ENCODE measurements at regions of chr3 and their contacts with region 1.

Region 1: DNA sequence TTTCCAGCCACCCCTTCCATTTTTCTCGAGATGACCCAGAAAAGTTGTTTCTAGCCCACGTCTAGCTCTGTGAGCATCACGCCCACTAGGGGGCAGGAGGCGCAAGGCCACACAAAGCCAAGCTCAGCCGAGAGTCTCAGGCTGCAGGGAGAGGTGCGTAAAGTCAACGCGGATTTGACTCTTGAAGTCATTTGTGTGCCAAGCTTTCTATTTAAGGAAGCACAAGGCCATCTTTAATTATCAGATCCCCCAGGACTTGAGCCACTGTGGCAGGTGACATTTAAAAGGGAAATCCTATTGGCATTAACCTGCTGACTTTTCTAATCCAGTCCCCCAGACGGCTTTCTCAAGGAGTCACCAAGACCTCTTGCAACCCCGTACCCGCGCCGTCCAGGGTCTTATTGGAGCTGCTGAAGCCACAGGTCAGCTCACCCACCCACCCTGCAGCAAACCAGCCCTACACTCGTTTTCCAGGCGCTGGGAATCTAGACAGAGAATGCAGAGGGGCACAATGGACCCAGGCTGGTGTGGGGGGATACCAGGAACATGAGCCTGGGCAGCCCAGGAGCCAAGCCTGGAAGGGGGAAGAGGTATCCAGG is 62.1 kb downstream of the CAPN7 start:
- DNase-seq: peak; percentile 82 to 85 (median 83)
- H3K4me3 ChIP-seq: no peak overlapping the region
- H3K4me3 Mint-ChIP-seq: peak overlapping the region in 7 of 8 donors; percentile 24 to 86 (median 60)
- H3K27ac ChIP-seq: peak overlapping the region; percentile 65
- H3K27ac Mint-ChIP-seq: peak overlapping the region; percentile 35 to 96 (median 87)
- H3K4me1 ChIP-seq: peaks cover 88% of the 10 kb centered on the region
- H3K4me1 Mint-ChIP-seq: peaks cover 50 to 93% (median 77%) of the 10 kb centered on the region in 4 donors
- H3K27me3 ChIP-seq: no peaks in the 10 kb centered on the region
- H3K27me3 Mint-ChIP-seq: no peaks in the 10 kb centered on the region

Region 2: DNA sequence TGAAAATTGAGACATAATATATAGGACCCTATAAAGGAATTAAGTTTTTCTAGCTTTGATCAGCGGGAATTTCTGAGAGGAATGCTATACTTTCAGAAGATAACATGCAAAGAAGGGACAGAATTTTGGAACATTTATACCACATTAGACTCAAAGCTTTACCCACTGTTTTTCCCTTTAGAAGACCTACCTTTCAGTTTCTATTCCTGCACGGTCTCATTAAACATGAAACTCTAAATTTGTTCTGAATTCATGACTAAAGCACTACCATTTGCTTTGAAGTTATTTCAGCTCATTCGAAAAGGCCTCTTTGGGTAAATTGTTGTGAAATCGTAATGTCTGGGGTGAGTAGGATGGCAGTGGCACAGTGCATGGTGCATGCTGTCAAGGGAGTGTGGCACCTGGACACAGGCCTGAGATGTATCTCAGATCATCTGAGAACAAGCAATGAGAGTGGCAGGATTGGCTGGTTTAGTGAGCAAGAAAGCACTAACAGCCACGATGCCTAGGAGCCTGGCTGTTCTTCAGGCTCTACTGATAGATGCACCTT is 1185.9 kb before region 1 on chr3:
- CTCF ChIA-PET with region 1: no interaction called
- POLR2A ChIA-PET with region 1: no interaction called
- intact Hi-C with region 1: no loop called
- DNase-seq: no peak
- H3K4me3 ChIP-seq: no peak overlapping the region
- H3K4me3 Mint-ChIP-seq: no peak overlapping the region
- H3K27ac ChIP-seq: no peak overlapping the region
- H3K27ac Mint-ChIP-seq: no peak overlapping the region
- H3K4me1 ChIP-seq: no peaks in the 10 kb centered on the region
- H3K4me1 Mint-ChIP-seq: peaks cover 0 to 4% (median 3%) of the 10 kb centered on the region in 4 donors
- H3K27me3 ChIP-seq: no peaks in the 10 kb centered on the region
- H3K27me3 Mint-ChIP-seq: peaks cover 2 to 7% of the 10 kb centered on the region in 2 donors

Region 3: GRCh38 chr3:15205934-15206661 is 62.0 kb before region 1 on chr3 and contains the start of gene CAPN7:
- CTCF ChIA-PET with region 1: interaction called, 68 read pairs
- POLR2A ChIA-PET with region 1: interaction called, 11 read pairs
- intact Hi-C with region 1: loop called (anchors 1 kb)
- DNase-seq: peak; percentile 92 to 95 (median 94)
- H3K4me3 ChIP-seq: peak within 1 kb of the TSS; percentile 70 to 83
- H3K4me3 Mint-ChIP-seq: peak within 1 kb of the TSS; percentile 91 to 96 (median 92)
- H3K27ac ChIP-seq: peak within 1 kb of the TSS; percentile 88
- H3K27ac Mint-ChIP-seq: peak within 1 kb of the TSS; percentile 77 to 97 (median 95)
- H3K4me1 ChIP-seq: peaks cover 46% of the 10 kb centered on the region
- H3K4me1 Mint-ChIP-seq: peaks cover 18 to 43% (median 29%) of the 10 kb centered on the region in 4 donors
- H3K27me3 ChIP-seq: no peaks in the 10 kb centered on the region
- H3K27me3 Mint-ChIP-seq: no peaks in the 10 kb centered on the region
- total RNA-seq, gene CAPN7: 95.5 to 103 TPM

Region 4: DNA sequence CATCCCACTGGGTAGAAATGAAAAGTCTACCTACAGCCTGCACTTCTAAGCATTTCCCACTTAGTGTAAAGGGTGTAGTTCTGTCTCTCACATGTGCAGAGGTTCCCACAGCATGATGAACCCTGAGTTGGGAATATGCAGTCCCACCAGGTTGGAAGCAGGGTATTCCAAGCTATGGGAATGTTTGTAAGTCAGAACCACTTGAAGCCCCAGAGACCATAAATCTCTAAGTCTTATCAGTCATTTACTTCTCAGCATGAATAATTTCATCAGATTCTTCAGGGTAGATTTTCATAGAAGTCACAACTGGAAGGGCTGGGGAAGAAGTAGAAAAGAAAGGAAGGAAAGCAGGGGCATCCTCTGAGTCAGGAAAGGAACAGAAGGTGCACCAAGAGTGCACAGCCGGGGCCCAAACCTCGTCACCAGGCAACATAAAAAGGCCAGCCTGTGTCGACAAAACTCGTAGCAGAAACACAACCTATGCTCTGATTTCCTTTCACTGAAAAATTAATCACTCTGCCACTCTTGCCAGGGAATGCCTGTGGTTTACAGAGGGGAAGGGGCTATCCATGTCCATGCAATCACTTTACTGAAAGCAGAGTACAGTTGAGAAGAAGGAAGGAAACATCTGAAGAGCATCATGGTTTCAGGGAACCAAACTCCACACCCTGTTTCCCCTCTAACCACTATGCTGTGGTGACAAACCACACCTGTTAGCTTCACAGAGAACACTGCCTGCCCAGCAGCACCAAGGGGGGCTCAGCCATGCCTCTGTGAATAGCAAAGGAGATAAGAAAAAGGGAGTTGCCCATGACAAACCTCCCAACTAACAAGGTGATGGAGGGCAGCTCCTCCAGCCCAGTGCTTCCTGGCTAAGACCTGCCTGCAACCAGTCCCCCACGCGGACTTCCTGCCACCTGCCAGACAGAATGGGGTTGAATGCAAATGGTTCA is 23.7 kb after region 1 on chr3:
- CTCF ChIA-PET with region 1: interaction called, 40 read pairs
- POLR2A ChIA-PET with region 1: interaction called, 32 read pairs
- intact Hi-C with region 1: loop called (anchors 1 kb)
- DNase-seq: peak; percentile 78 to 92 (median 80)
- H3K4me3 ChIP-seq: peak overlapping the region; percentile 21 to 42
- H3K4me3 Mint-ChIP-seq: peak overlapping the region; percentile 76 to 85 (median 80)
- H3K27ac ChIP-seq: peak overlapping the region; percentile 70
- H3K27ac Mint-ChIP-seq: peak overlapping the region; percentile 91 to 97 (median 92)
- H3K4me1 ChIP-seq: peaks cover 93% of the 10 kb centered on the region
- H3K4me1 Mint-ChIP-seq: peaks cover 72 to 98% (median 85%) of the 10 kb centered on the region in 4 donors
- H3K27me3 ChIP-seq: no peaks in the 10 kb centered on the region
- H3K27me3 Mint-ChIP-seq: no peaks in the 10 kb centered on the region

Region 5: GRCh38 chr3:15319575-15319974 is 51.4 kb after region 1 on chr3:
- CTCF ChIA-PET with region 1: interaction called, 38 read pairs
- POLR2A ChIA-PET with region 1: interaction called, 11 read pairs
- intact Hi-C with region 1: no loop called
- DNase-seq: no peak
- H3K4me3 ChIP-seq: no peak overlapping the region
- H3K4me3 Mint-ChIP-seq: peak overlapping the region; percentile 9 to 88 (median 38)
- H3K27ac ChIP-seq: peak overlapping the region; percentile 5
- H3K27ac Mint-ChIP-seq: peak overlapping the region in 4 of 7 donors; percentile 46 to 90 (median 86)
- H3K4me1 ChIP-seq: peaks cover 88% of the 10 kb centered on the region
- H3K4me1 Mint-ChIP-seq: peaks cover 63 to 96% (median 77%) of the 10 kb centered on the region in 4 donors
- H3K27me3 ChIP-seq: no peaks in the 10 kb centered on the region
- H3K27me3 Mint-ChIP-seq: no peaks in the 10 kb centered on the region

Region 6: DNA sequence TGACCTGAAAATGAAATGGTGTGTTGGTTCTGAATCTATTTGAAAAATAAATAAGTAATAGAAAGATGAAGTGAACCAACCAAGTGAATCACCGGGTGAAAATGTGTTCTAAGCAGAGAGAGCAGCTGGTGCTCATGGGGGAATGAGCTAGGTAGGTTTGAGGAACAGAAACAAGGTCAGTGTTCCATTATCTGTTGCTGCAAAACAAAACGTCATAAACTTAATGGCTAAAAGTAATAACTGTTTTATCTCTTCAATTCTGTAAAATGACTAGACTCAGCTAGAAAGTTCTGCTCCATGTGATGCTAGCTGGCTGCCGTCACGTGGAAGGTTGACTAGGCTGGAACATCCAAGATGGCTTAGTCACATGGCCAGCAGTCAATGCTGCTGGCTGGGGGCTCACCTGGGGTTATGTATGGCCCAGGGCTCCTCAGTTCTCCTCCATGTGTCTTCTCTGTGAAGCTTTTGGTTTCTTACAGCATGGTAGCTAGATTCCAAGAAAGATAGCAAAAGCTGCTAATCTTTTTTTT is 77.5 kb after region 1 on chr3:
- CTCF ChIA-PET with region 1: interaction called, 41 read pairs
- POLR2A ChIA-PET with region 1: interaction called, 47 read pairs
- intact Hi-C with region 1: no loop called
- DNase-seq: peak in 2 of 5 donors; percentile 21 to 31
- H3K4me3 ChIP-seq: no peak overlapping the region
- H3K4me3 Mint-ChIP-seq: peak overlapping the region in 6 of 8 donors; percentile 23 to 70 (median 41)
- H3K27ac ChIP-seq: no peak overlapping the region
- H3K27ac Mint-ChIP-seq: peak overlapping the region; percentile 36 to 91 (median 71)
- H3K4me1 ChIP-seq: peaks cover 64% of the 10 kb centered on the region
- H3K4me1 Mint-ChIP-seq: peaks cover 51 to 79% (median 67%) of the 10 kb centered on the region in 4 donors
- H3K27me3 ChIP-seq: no peaks in the 10 kb centered on the region
- H3K27me3 Mint-ChIP-seq: no peaks in the 10 kb centered on the region

Region 7: GRCh38 chr3:15377961-15378791 is 110.0 kb after region 1 on chr3:
- CTCF ChIA-PET with region 1: interaction called, 224 read pairs
- POLR2A ChIA-PET with region 1: interaction called, 19 read pairs
- intact Hi-C with region 1: loop called (anchors 1 kb)
- DNase-seq: peak; percentile 94 to 97 (median 95)
- H3K4me3 ChIP-seq: no peak overlapping the region
- H3K4me3 Mint-ChIP-seq: peak overlapping the region in 5 of 8 donors; percentile 11 to 82 (median 22)
- H3K27ac ChIP-seq: peak overlapping the region; percentile 91
- H3K27ac Mint-ChIP-seq: peak overlapping the region; percentile 95 to 98 (median 97)
- H3K4me1 ChIP-seq: peaks cover 5% of the 10 kb centered on the region
- H3K4me1 Mint-ChIP-seq: peaks cover 9 to 10% (median 9%) of the 10 kb centered on the region in 4 donors
- H3K27me3 ChIP-seq: no peaks in the 10 kb centered on the region
- H3K27me3 Mint-ChIP-seq: peaks cover 0 to 1% of the 10 kb centered on the region in 2 donors

Region 8: GRCh38 chr3:15557511-15557946 is 289.4 kb after region 1 on chr3:
- CTCF ChIA-PET with region 1: interaction called, 11 read pairs
- POLR2A ChIA-PET with region 1: no interaction called
- intact Hi-C with region 1: loop called (anchors 1 kb)
- DNase-seq: peak; percentile 67 to 82 (median 79)
- H3K4me3 ChIP-seq: no peak overlapping the region
- H3K4me3 Mint-ChIP-seq: peak overlapping the region in 2 of 8 donors; percentile 9 to 59
- H3K27ac ChIP-seq: no peak overlapping the region
- H3K27ac Mint-ChIP-seq: peak overlapping the region; percentile 5 to 75 (median 62)
- H3K4me1 ChIP-seq: peaks cover 19% of the 10 kb centered on the region
- H3K4me1 Mint-ChIP-seq: peaks cover 17 to 23% (median 20%) of the 10 kb centered on the region in 4 donors
- H3K27me3 ChIP-seq: no peaks in the 10 kb centered on the region
- H3K27me3 Mint-ChIP-seq: no peaks in the 10 kb centered on the region